Activated naive CD4-positive, alpha-beta T cell treated with anti-CD3 and anti-CD28 coated beads for 36 hours (primary cell): ENCODE measurements at regions of chr3 and their contacts with region 1.

Region 1: GRCh38 chr3:8111069-8111798 is 390.4 kb upstream of the LMCD1 start:
- DNase-seq: peak; percentile 74
- H3K4me3 Mint-ChIP-seq: no peak overlapping the region
- H3K27ac Mint-ChIP-seq: no peak overlapping the region
- H3K4me1 Mint-ChIP-seq: peaks cover 2% of the 10 kb centered on the region
- H3K27me3 Mint-ChIP-seq: no peaks in the 10 kb centered on the region

Region 2: DNA sequence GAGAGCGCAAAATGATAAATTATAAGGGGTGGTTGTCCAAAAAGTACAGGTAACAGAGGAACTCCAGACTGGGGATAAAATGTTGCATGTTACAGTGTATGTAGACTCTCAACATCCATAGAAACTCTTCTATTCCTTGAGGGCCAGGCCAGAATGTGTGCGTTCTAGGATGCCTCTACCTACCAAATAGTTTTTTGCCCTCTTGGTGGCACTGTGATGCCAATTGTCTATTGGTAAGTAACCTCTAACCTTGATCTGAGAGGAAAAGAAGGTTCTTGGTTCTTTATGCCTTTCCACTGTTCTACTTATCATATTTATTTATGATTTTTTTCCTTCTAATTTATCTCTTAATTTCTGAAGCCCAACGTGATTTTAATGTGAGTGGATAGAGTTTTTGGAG is 825.7 kb before region 1 on chr3:
- CTCF ChIA-PET with region 1: no interaction called
- intact Hi-C with region 1: loop called (anchors 2 kb)
- DNase-seq: peak; percentile 8
- H3K4me3 Mint-ChIP-seq: no peak overlapping the region
- H3K27ac Mint-ChIP-seq: no peak overlapping the region
- H3K4me1 Mint-ChIP-seq: no peaks in the 10 kb centered on the region
- H3K27me3 Mint-ChIP-seq: peaks cover 2% of the 10 kb centered on the region

Region 3: DNA sequence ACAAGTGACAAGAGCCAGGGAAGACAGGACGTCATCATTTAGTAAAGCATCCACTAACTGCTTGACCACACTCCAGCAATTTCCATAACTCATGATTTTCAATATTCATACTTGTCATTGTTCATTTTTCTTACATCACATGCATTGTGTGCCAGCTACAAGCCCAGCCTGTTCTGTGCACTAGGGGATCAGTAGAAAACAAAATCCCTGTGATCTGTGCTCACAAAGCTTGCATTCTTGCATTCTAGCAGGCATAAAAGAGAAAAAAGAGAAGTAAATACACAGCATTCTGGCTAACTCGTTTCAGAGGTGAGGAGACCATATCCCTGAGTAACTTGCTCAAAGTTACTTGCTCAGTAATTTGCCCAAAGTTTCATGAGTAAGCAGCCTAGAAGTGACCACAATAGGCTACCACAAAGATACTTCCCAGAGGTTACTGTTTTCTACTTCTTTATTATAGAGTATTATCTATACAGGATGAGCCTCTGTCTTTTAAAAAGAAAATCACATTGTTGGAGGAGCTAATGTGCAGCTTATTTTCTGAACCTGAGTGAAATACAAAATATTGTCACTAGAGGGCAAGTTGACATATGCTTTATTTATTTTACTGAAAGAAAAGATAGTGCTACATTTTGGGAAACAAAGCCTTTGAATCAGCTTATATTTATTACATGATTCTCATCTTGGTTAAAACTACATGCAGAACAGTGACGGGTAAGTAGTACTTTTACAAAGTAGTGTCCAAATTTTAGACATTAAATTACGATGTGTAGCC is 311.0 kb before region 1 on chr3:
- CTCF ChIA-PET with region 1: interaction called, 4 read pairs
- intact Hi-C with region 1: loop called (anchors 1 kb)
- DNase-seq: no peak
- H3K4me3 Mint-ChIP-seq: no peak overlapping the region
- H3K27ac Mint-ChIP-seq: no peak overlapping the region
- H3K4me1 Mint-ChIP-seq: peaks cover 2% of the 10 kb centered on the region
- H3K27me3 Mint-ChIP-seq: no peaks in the 10 kb centered on the region

Region 4: DNA sequence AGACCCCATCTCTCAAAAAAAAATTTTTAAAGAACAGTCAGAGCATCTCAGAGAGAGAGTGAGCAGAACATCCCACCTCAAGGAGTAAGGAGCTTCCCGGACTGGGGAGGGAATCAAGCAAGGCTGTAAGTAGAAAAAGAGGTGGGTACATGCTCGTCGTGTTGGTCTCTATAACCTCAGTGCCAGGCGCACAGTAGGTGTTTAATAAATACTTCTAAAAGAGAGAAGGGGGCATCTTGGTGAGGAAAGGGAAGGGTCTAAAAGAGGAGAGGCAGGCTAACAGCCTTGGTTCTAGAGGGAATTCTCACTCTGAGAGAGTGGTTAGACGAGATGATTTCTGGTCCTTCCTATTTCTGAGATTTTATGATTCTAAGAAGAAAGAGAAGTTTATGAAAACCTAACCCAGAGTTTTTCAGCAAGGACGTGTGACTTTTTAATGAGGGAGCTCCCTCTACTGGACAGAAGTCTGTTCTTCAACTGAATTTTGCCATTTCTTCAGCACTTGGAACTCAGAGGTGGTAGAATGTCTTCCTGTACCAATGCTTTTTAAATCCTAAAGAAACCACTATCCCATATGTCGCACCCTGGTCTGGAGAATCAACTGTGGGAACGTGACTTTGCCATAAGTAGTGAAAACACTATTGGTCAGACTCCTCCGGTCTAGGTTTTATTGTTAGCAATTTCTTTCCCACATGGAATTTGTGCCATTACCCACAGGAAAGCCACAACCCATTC is 190.7 kb after region 1 on chr3:
- CTCF ChIA-PET with region 1: interaction called, 3 read pairs
- intact Hi-C with region 1: loop called (anchors 10 kb)
- DNase-seq: peak; percentile 10
- H3K4me3 Mint-ChIP-seq: no peak overlapping the region
- H3K27ac Mint-ChIP-seq: no peak overlapping the region
- H3K4me1 Mint-ChIP-seq: peaks cover 5% of the 10 kb centered on the region
- H3K27me3 Mint-ChIP-seq: no peaks in the 10 kb centered on the region

Region 5: GRCh38 chr3:8416965-8417364 is 305.7 kb after region 1 on chr3:
- CTCF ChIA-PET with region 1: no interaction called
- intact Hi-C with region 1: loop called (anchors 2 kb)
- DNase-seq: peak; percentile 9
- H3K4me3 Mint-ChIP-seq: no peak overlapping the region
- H3K27ac Mint-ChIP-seq: no peak overlapping the region
- H3K4me1 Mint-ChIP-seq: peaks cover 4% of the 10 kb centered on the region
- H3K27me3 Mint-ChIP-seq: no peaks in the 10 kb centered on the region